IMR-90 (cell line): ENCODE measurements at regions of chr2 and their contacts with region 1.

Region 1: DNA sequence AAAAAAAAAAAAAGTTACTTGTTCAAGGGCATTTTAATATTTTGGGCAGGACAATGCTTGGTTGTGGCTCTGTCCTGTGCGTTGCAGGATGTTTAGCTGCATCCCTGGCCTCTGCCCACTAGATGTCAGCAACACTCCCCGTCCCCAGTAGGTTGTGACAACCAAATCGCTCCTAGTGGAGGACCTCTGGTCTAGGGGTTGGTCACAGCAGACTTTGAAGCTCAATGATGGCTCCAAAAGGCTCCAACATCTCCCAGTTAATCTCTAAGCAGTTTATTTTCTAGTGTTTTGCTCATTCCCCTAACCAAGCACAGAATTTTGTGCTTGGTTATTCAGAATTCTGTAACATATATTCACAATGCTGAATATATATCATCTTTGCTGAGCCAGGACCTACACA is 67.0 kb downstream of the CHRNA1 start:
- DNase-seq: peak; percentile 57
- ATAC-seq: peak; percentile 93
- H3K4me3 ChIP-seq: no peak overlapping the region
- H3K27ac ChIP-seq: no peak overlapping the region
- H3K4me1 ChIP-seq: no peaks in the 10 kb centered on the region
- H3K27me3 ChIP-seq: peaks cover 34% of the 10 kb centered on the region
- CTCF ChIP-seq: peak; percentile 82
- POLR2A ChIP-seq: no peak
- RAD21 ChIP-seq: peak; percentile 72

Region 2: GRCh38 chr2:174465327-174465726 is 231.9 kb before region 1 on chr2:
- CTCF ChIA-PET with region 1: interaction called, 6 read pairs
- POLR2A ChIA-PET with region 1: no interaction called
- dilution Hi-C with region 1: no loop called
- in situ Hi-C with region 1: loop called (anchors 10 kb)
- intact Hi-C with region 1: no loop called
- DNase-seq: no peak
- ATAC-seq: no peak
- H3K4me3 ChIP-seq: no peak overlapping the region
- H3K27ac ChIP-seq: no peak overlapping the region
- H3K4me1 ChIP-seq: no peaks in the 10 kb centered on the region
- H3K27me3 ChIP-seq: no peaks in the 10 kb centered on the region
- CTCF ChIP-seq: no peak
- POLR2A ChIP-seq: no peak
- RAD21 ChIP-seq: no peak

Region 3: DNA sequence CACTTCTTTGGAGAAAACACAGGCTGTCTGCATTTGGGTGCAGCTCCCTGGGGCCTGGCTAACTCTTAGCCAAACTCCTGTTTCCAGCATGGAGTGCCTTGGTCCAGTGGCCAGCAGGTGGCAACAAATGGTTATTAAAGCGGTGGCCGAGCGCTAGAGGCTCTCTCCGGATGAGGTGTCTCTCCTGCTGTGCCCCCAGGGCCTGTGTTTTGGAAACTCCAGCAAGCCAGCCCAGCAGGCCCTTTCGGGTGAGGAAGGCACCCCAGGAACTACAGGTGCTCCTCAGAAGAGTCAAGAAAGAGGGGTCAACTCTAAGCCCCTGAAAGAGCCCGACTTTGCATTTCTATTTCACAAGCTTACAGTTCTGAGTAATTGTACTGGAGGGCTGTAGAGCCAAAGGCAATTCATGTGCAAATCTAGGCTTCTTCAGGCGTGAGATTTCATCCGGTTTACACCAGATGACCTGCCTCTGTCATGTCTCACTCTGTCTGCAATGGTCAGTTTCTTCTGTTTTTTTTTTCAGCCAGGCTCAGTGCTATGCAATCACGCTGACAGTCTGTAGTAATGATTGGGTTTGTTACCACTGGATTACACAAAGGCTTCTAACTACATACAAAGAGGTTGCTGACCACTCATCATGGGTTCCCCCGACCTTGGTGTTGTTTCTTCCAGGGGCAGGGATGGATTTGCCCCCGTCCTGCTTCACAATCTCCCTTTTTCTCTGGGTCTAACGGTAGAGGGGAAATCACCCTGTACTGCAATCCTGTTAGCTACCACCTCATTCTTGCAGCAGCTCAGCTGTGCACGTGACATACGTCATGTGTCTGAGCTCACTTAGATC is 74.6 kb after region 1 on chr2:
- CTCF ChIA-PET with region 1: interaction called, 7 read pairs
- POLR2A ChIA-PET with region 1: no interaction called
- dilution Hi-C with region 1: no loop called
- in situ Hi-C with region 1: no loop called
- intact Hi-C with region 1: loop called (anchors 2 kb)
- DNase-seq: peak; percentile 82
- ATAC-seq: peak; percentile 86
- H3K4me3 ChIP-seq: no peak overlapping the region
- H3K27ac ChIP-seq: peak overlapping the region; percentile 93
- H3K4me1 ChIP-seq: peaks cover 24% of the 10 kb centered on the region
- H3K27me3 ChIP-seq: no peaks in the 10 kb centered on the region
- CTCF ChIP-seq: peak; percentile 94
- POLR2A ChIP-seq: no peak
- RAD21 ChIP-seq: peak; percentile 94

Region 4: GRCh38 chr2:174985630-174986029 is 288.4 kb after region 1 on chr2:
- CTCF ChIA-PET with region 1: interaction called, 12 read pairs
- POLR2A ChIA-PET with region 1: no interaction called
- dilution Hi-C with region 1: no loop called
- in situ Hi-C with region 1: no loop called
- intact Hi-C with region 1: loop called (anchors 1 kb)
- DNase-seq: peak; percentile 65
- ATAC-seq: peak; percentile 40; the same call in 1 of the 2 replicates
- H3K4me3 ChIP-seq: no peak overlapping the region
- H3K27ac ChIP-seq: peak overlapping the region; percentile 49; the same call in 1 of the 2 replicates
- H3K4me1 ChIP-seq: peaks cover 3% of the 10 kb centered on the region; the same call in 1 of the 2 replicates
- H3K27me3 ChIP-seq: no peaks in the 10 kb centered on the region
- CTCF ChIP-seq: peak; percentile 84
- POLR2A ChIP-seq: no peak
- RAD21 ChIP-seq: peak; percentile 84

Region 5: GRCh38 chr2:175097297-175097696 is 400.0 kb after region 1 on chr2:
- CTCF ChIA-PET with region 1: no interaction called
- POLR2A ChIA-PET with region 1: no interaction called
- dilution Hi-C with region 1: no loop called
- in situ Hi-C with region 1: no loop called
- intact Hi-C with region 1: loop called (anchors 5 kb)
- DNase-seq: peak; percentile 97
- ATAC-seq: peak; percentile 100
- H3K4me3 ChIP-seq: no peak overlapping the region
- H3K27ac ChIP-seq: no peak overlapping the region
- H3K4me1 ChIP-seq: peaks cover 3% of the 10 kb centered on the region
- H3K27me3 ChIP-seq: no peaks in the 10 kb centered on the region
- CTCF ChIP-seq: no peak
- POLR2A ChIP-seq: no peak
- RAD21 ChIP-seq: no peak

Region 6: DNA sequence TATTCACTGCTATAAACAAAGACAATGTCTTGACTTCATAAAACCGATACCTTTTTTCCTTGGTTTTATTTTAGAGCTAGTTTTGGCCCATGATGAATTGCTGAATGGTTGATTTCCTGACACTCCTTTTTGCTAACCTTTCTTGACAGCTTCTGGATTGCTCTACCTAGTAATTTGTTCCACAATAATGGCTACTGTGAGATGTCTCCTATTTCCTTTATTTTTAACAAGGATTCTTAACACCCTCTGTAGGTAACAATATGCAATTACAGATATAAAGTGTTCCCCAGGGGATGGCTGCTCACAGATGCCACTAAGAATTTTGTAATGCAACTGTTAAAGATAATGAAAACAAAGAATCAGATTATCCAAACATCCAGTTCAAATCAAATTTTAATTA is 585.0 kb after region 1 on chr2:
- CTCF ChIA-PET with region 1: no interaction called
- POLR2A ChIA-PET with region 1: no interaction called
- dilution Hi-C with region 1: no loop called
- in situ Hi-C with region 1: loop called (anchors 10 kb)
- intact Hi-C with region 1: loop called (anchors 10 kb)
- DNase-seq: peak; percentile 28
- ATAC-seq: peak; percentile 93
- H3K4me3 ChIP-seq: no peak overlapping the region
- H3K27ac ChIP-seq: no peak overlapping the region
- H3K4me1 ChIP-seq: no peaks in the 10 kb centered on the region
- H3K27me3 ChIP-seq: peaks cover 12% of the 10 kb centered on the region
- CTCF ChIP-seq: peak; percentile 56
- POLR2A ChIP-seq: no peak
- RAD21 ChIP-seq: no peak; the same call in 1 of the 2 replicates

Region 7: DNA sequence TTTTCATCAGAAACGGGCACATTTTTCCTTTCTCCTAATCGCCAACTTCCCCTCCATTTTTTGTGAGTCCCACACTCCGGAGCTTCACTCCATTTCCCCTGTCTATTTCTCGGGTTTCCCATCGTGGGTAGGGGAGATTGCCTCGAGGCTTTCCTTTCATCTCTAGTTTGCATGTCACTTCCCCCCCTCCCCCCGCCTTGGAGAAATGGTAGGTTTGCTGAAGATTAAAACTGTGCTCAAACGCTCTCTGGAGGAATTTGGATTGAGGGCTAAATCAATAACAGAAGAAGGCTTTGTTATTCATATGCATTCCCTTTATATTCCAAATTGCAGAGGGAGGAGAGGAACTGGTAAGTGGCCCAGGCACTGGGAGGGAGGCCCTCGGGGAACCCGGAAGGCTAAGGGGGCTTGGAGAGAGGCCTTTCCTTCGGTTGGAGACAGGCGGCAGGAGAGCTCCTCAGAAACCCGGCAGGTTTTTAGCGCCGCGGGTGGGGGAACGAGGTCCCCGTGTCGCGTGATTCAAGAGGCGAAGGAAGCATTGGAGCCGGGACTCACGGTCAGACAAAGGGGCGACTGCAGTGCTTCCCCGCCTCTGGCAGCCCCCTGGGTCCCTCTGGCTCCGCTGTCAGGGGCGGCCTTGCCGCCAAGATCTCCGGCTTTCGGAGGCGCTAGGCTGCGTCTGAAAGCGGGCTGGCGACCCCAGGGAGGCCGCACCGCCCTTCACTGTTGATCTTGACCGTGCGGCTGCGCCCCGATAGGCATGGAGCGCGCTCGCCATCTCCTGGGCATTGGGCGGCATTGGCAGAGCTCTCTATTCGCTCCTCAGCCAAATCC is 1399.9 kb after region 1 on chr2:
- CTCF ChIA-PET with region 1: no interaction called
- POLR2A ChIA-PET with region 1: no interaction called
- dilution Hi-C with region 1: no loop called
- in situ Hi-C with region 1: no loop called
- intact Hi-C with region 1: loop called (anchors 10 kb)
- DNase-seq: peak; percentile 48
- ATAC-seq: peak; percentile 95
- H3K4me3 ChIP-seq: peak overlapping the region; percentile 35
- H3K27ac ChIP-seq: no peak overlapping the region
- H3K4me1 ChIP-seq: peaks cover 3% of the 10 kb centered on the region; the same call in 1 of the 2 replicates
- H3K27me3 ChIP-seq: peaks cover 92% of the 10 kb centered on the region
- CTCF ChIP-seq: peak; percentile 76
- POLR2A ChIP-seq: no peak
- RAD21 ChIP-seq: peak; percentile 83